B cell (primary cell): ENCODE measurements at regions of chr22 and their contacts with region 1.

Region 1: DNA sequence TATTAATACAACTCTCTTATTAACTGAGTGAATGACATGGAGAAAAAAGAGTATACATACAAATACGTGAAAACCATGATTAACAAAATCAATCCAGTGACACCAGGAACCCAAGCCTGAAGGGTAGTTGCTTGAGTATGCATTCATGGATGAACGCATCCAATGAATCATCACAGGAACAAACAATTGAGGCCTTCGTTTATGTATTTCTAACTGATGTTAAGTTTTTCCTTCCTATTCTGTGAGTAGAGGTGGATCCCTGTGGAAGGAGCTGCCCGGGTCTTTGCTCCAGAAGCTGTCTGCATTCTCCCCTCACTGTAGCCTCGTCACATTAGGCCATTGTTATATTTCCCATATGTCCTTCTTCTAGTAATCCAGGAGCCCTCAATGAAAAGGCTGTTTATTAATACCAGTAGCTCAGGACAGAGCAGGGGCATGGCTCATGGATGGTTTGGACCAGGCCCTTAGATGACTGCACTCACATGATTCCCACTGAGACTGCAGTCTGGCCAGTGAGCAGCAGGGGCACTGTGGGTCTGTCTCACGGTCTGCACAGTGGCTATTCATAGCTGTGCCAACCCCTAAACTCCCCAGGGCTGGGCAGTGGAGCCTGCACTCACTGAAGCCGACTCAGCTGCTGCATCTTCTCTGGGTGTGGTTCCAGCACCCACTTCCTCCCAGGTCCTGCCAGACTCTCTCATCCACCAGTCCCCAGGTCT is 128.1 kb upstream of the TOP3B start:
- DNase-seq: peak; percentile 94
- ATAC-seq: peak; percentile 96
- H3K4me3 ChIP-seq: peak overlapping the region in 1 of 5 experiments; percentile 48
- H3K4me3 Mint-ChIP-seq: peak overlapping the region; percentile 78
- H3K27ac ChIP-seq: peak overlapping the region; percentile 78 to 93
- H3K27ac Mint-ChIP-seq: peak overlapping the region; percentile 97
- H3K4me1 ChIP-seq: peaks cover 42 to 44% of the 10 kb centered on the region in 2 donors
- H3K4me1 Mint-ChIP-seq: peaks cover 46% of the 10 kb centered on the region
- H3K27me3 ChIP-seq: no peaks in the 10 kb centered on the region
- H3K27me3 Mint-ChIP-seq: no peaks in the 10 kb centered on the region
- CTCF ChIP-seq: peak; percentile 80

Region 2: GRCh38 chr22:21902296-21903087 is 208.2 kb before region 1 on chr22:
- CTCF ChIA-PET with region 1: no interaction called
- POLR2A ChIA-PET with region 1: no interaction called
- intact Hi-C with region 1: no loop called
- DNase-seq: no peak
- ATAC-seq: no peak
- H3K4me3 ChIP-seq: no peak overlapping the region
- H3K4me3 Mint-ChIP-seq: no peak overlapping the region
- H3K27ac ChIP-seq: no peak overlapping the region
- H3K27ac Mint-ChIP-seq: no peak overlapping the region
- H3K4me1 ChIP-seq: no peaks in the 10 kb centered on the region
- H3K4me1 Mint-ChIP-seq: no peaks in the 10 kb centered on the region
- H3K27me3 ChIP-seq: no peaks in the 10 kb centered on the region
- H3K27me3 Mint-ChIP-seq: no peaks in the 10 kb centered on the region
- CTCF ChIP-seq: no peak

Region 3: DNA sequence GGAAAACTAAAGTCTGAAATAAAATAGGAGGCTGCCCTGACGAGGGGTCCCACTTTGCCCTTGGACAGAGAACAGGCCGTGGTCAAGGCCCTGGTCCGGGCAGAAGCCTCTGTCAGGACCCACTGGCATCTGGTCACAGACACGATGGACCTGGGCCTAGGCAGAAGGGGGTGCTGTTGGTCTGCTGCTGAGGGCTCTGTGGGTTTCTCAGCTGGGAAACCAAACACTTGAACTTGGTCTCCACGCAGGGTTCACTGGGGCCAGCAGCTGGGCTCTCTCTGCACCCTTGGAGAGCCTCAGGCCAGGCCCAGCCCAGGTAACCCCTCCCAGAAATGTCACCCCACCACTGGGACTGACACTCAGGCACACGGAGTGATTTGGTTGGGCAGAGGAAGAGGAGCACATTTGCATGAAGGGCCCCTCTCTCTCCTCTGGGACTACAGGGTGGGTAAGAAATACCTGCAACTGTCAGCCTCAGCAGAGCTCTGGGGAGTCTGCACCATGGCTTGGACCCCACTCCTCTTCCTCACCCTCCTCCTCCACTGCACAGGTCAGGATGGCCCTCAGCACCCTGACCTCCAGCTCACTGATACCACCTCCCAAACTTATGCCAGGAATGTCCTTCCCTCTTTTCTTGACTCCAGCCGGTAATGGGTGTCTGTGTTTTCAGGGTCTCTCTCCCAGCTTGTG is 80.1 kb before region 1 on chr22:
- CTCF ChIA-PET with region 1: interaction called, 84 read pairs
- POLR2A ChIA-PET with region 1: interaction called, 10 read pairs
- intact Hi-C with region 1: loop called (anchors 2 kb)
- DNase-seq: peak; percentile 80
- ATAC-seq: peak; percentile 80
- H3K4me3 ChIP-seq: peak overlapping the region in 4 of 5 experiments; percentile 31 to 51 (median 45)
- H3K4me3 Mint-ChIP-seq: peak overlapping the region; percentile 91
- H3K27ac ChIP-seq: peak overlapping the region; percentile 70 to 75
- H3K27ac Mint-ChIP-seq: peak overlapping the region; percentile 97
- H3K4me1 ChIP-seq: peaks cover 56 to 69% of the 10 kb centered on the region in 2 donors
- H3K4me1 Mint-ChIP-seq: peaks cover 77% of the 10 kb centered on the region
- H3K27me3 ChIP-seq: no peaks in the 10 kb centered on the region
- H3K27me3 Mint-ChIP-seq: no peaks in the 10 kb centered on the region
- CTCF ChIP-seq: peak; percentile 67

Region 4: GRCh38 chr22:22060200-22061084 is 50.3 kb before region 1 on chr22:
- CTCF ChIA-PET with region 1: interaction called, 36 read pairs
- POLR2A ChIA-PET with region 1: interaction called, 3 read pairs
- intact Hi-C with region 1: no loop called
- DNase-seq: peak; percentile 75
- ATAC-seq: peak; percentile 68
- H3K4me3 ChIP-seq: no peak overlapping the region
- H3K4me3 Mint-ChIP-seq: no peak overlapping the region
- H3K27ac ChIP-seq: no peak overlapping the region
- H3K27ac Mint-ChIP-seq: peak overlapping the region; percentile 73
- H3K4me1 ChIP-seq: peaks cover 33 to 36% of the 10 kb centered on the region in 2 donors
- H3K4me1 Mint-ChIP-seq: peaks cover 37% of the 10 kb centered on the region
- H3K27me3 ChIP-seq: no peaks in the 10 kb centered on the region
- H3K27me3 Mint-ChIP-seq: peaks cover 3% of the 10 kb centered on the region
- CTCF ChIP-seq: peak; percentile 86

Region 5: GRCh38 chr22:22144858-22145257 is 34.2 kb after region 1 on chr22:
- CTCF ChIA-PET with region 1: interaction called, 15 read pairs
- POLR2A ChIA-PET with region 1: interaction called, 6 read pairs
- intact Hi-C with region 1: no loop called
- DNase-seq: no peak
- ATAC-seq: no peak
- H3K4me3 ChIP-seq: no peak overlapping the region
- H3K4me3 Mint-ChIP-seq: no peak overlapping the region
- H3K27ac ChIP-seq: no peak overlapping the region
- H3K27ac Mint-ChIP-seq: no peak overlapping the region
- H3K4me1 ChIP-seq: no peaks in the 10 kb centered on the region
- H3K4me1 Mint-ChIP-seq: peaks cover 4% of the 10 kb centered on the region
- H3K27me3 ChIP-seq: no peaks in the 10 kb centered on the region
- H3K27me3 Mint-ChIP-seq: no peaks in the 10 kb centered on the region
- CTCF ChIP-seq: no peak

Region 6: DNA sequence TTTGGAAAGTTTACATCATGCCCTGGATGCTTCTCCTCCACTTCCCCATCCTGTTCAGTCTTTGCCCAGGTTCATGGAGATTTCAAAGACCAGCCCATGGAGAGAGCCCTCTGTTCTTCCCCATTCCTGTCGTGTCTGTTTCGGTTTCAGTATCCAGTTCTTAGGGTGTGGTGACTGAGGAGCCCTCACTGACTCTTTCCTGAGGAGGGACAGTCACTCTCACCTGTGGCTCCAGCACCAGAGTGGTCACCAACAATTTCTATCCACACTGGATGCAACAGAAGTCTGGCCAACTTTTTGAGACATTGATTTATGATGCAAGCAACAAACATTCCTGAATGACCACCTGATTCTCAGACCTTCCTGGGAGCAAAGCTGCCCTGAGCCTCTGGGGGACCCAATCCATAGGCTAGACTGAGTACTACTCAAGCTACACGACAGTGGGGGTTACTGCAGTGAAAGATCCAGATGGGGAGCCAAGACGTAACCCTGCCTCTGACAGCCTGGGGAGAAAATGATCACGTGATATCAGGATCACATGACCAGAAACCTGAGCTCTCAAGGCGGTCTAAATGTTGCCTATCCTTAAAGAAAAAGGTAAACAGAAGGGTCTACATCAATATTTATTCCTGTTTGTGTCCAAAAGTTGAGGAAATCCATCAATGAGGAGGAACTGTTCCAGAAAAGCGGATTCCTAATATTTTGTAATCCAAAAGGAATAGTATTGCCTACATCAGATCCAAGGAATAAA is 57.7 kb after region 1 on chr22:
- CTCF ChIA-PET with region 1: interaction called, 29 read pairs
- POLR2A ChIA-PET with region 1: interaction called, 13 read pairs
- intact Hi-C with region 1: loop called (anchors 1 kb)
- DNase-seq: peak; percentile 74
- ATAC-seq: peak; percentile 55
- H3K4me3 ChIP-seq: peak overlapping the region; percentile 20 to 59 (median 40)
- H3K4me3 Mint-ChIP-seq: peak overlapping the region; percentile 92
- H3K27ac ChIP-seq: peak overlapping the region; percentile 96 to 98
- H3K27ac Mint-ChIP-seq: peak overlapping the region; percentile 100
- H3K4me1 ChIP-seq: peaks cover 80 to 88% of the 10 kb centered on the region in 2 donors
- H3K4me1 Mint-ChIP-seq: peaks cover 81% of the 10 kb centered on the region
- H3K27me3 ChIP-seq: no peaks in the 10 kb centered on the region
- H3K27me3 Mint-ChIP-seq: no peaks in the 10 kb centered on the region
- CTCF ChIP-seq: no peak

Region 7: GRCh38 chr22:22207845-22208564 is 97.3 kb after region 1 on chr22:
- CTCF ChIA-PET with region 1: interaction called, 30 read pairs
- POLR2A ChIA-PET with region 1: interaction called, 3 read pairs
- intact Hi-C with region 1: loop called (anchors 1 kb)
- DNase-seq: peak; percentile 90
- ATAC-seq: peak; percentile 85
- H3K4me3 ChIP-seq: peak overlapping the region in 1 of 5 experiments; percentile 12
- H3K4me3 Mint-ChIP-seq: peak overlapping the region; percentile 67
- H3K27ac ChIP-seq: peak overlapping the region; percentile 45 to 51
- H3K27ac Mint-ChIP-seq: peak overlapping the region; percentile 93
- H3K4me1 ChIP-seq: peaks cover 53 to 57% of the 10 kb centered on the region in 2 donors
- H3K4me1 Mint-ChIP-seq: peaks cover 54% of the 10 kb centered on the region
- H3K27me3 ChIP-seq: no peaks in the 10 kb centered on the region
- H3K27me3 Mint-ChIP-seq: no peaks in the 10 kb centered on the region
- CTCF ChIP-seq: peak; percentile 89